CD4-positive, alpha-beta memory T cell (primary cell): ENCODE measurements at regions of chr2 and their contacts with region 1.

Region 1: GRCh38 chr2:157182834-157183396 is 74.6 kb upstream of the GALNT5 start:
- DNase-seq: peak in 3 of 5 donors; percentile 3 to 6 (median 5)
- H3K4me3 ChIP-seq: no peak overlapping the region
- H3K4me3 Mint-ChIP-seq: peak overlapping the region in 1 of 8 donors; percentile 8
- H3K27ac ChIP-seq: no peak overlapping the region
- H3K27ac Mint-ChIP-seq: peak overlapping the region in 1 of 7 donors; percentile 22
- H3K4me1 ChIP-seq: no peaks in the 10 kb centered on the region
- H3K4me1 Mint-ChIP-seq: peaks cover 0 to 17% (median under 1%) of the 10 kb centered on the region in 4 donors
- H3K27me3 ChIP-seq: no peaks in the 10 kb centered on the region
- H3K27me3 Mint-ChIP-seq: peaks cover 2 to 3% of the 10 kb centered on the region in 2 donors

Region 2: GRCh38 chr2:156625360-156626170 is 557.4 kb before region 1 on chr2:
- CTCF ChIA-PET with region 1: no interaction called
- POLR2A ChIA-PET with region 1: no interaction called
- intact Hi-C with region 1: no loop called
- DNase-seq: no peak
- H3K4me3 ChIP-seq: no peak overlapping the region
- H3K4me3 Mint-ChIP-seq: no peak overlapping the region
- H3K27ac ChIP-seq: no peak overlapping the region
- H3K27ac Mint-ChIP-seq: no peak overlapping the region
- H3K4me1 ChIP-seq: no peaks in the 10 kb centered on the region
- H3K4me1 Mint-ChIP-seq: no peaks in the 10 kb centered on the region
- H3K27me3 ChIP-seq: no peaks in the 10 kb centered on the region
- H3K27me3 Mint-ChIP-seq: peaks cover 5 to 10% of the 10 kb centered on the region in 2 donors

Region 3: DNA sequence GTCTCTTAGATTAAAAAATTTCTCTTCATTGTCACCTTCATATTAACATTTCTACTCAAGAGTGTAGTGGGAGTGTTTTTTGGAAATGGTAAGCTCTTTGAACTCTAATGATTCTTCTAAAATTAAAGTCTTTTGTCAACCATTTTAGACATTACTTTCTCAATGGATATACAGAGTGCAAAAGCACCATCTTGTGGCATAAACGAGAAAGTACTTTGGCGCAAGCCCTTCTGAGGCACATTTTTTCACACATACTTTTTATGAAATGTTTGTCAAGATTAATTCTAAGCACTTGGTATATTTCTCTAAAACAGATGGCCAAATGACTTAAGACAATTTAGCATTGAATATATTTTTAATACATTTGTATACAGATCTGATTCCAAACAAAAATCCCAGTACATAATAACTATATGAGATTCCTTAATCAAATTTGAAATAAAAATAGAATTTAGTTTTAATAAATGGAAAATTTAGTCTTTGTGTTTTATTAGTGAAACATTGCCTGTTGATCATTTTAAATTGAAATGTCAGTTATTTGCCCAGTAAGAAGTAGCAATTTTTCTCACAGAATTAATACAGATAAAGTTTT is 11.3 kb after region 1 on chr2:
- CTCF ChIA-PET with region 1: interaction called, 13 read pairs
- POLR2A ChIA-PET with region 1: no interaction called
- intact Hi-C with region 1: no loop called
- DNase-seq: peak in 4 of 5 donors; percentile 8 to 25 (median 22)
- H3K4me3 ChIP-seq: no peak overlapping the region
- H3K4me3 Mint-ChIP-seq: no peak overlapping the region
- H3K27ac ChIP-seq: no peak overlapping the region
- H3K27ac Mint-ChIP-seq: no peak overlapping the region
- H3K4me1 ChIP-seq: no peaks in the 10 kb centered on the region
- H3K4me1 Mint-ChIP-seq: peaks cover 0 to 1% (median 0%) of the 10 kb centered on the region in 4 donors
- H3K27me3 ChIP-seq: no peaks in the 10 kb centered on the region
- H3K27me3 Mint-ChIP-seq: peaks cover 4 to 9% of the 10 kb centered on the region in 2 donors